Posterior cingulate gyrus (tissue), 11 donors: ENCODE measurements at regions of chr5 and their contacts with region 1.

Region 1: DNA sequence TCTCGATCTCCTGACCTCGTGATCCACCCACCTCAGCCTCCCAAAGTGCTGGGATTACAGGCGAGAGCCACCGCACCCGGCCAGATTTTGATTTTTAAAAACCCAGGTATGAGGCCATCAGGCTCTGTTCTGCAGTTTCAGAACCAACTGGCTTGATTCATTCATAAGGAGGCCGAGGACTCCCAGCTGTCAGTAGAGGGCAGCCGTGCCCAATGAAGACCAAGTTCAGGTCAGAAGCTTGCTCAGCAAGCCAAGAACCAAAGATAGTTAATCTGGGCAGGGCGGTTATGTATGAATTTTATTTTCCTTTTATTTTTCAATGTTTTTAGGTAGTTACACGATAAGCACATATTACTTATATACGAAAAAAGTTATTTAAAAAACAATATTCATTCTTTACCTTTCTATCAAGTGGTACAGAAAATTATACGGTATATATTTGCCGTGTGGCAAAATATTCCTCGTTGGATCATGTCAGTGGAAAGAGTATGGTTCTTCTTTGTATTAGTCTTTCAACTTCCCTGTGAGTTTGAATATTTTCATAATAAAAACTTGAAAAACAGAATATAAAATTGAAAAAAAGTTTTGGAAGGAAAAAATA is 18.0 kb downstream of the MGAT1 start:
- DNase-seq: peak in 9 of 10 donors; percentile 66 to 97 (median 81)

Region 2: DNA sequence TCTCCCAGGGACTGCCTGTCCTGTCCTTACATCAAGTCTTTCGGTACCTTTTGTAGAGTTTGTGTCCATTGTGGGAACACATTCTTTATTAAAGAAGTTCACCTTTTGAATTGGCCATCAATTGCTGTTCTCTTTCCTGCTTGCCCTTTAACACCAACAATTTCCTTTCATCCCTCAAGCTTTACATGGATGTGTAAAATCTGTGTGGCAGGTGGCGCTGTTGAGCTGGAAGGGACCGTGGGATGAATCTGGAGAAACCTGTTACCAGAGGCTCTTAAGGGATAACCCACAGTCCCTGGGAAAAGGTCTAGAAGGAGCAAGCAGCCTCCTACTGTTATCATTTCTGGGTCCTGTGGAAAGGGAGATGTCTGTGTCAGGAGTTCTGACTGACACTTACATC is 84.4 kb after region 1 on chr5:
- intact Hi-C with region 1: loop called (anchors 2 kb)
- DNase-seq: peak; percentile 50 to 95 (median 82)

Region 3: GRCh38 chr5:181181650-181182565 is 397.3 kb after region 1 on chr5:
- intact Hi-C with region 1: loop called (anchors 10 kb)
- DNase-seq: peak in 2 of 10 donors; percentile 57 to 76